Activated T-helper 1 cell treated with anti-CD3 and anti-CD28 coated beads, Interleukin-12 subunit alpha, Interleukin-12 subunit beta, Interleukin-2, Interleukin-4 antibody, amounts not matched to agents 30 ng/mL and 10 ng/mL and 1 ng/mL, durations not matched to agents 14 hours and 24 hours and 36 hours (primary cell): ENCODE measurements at regions of chr6 and their contacts with region 1.

Region 1: DNA sequence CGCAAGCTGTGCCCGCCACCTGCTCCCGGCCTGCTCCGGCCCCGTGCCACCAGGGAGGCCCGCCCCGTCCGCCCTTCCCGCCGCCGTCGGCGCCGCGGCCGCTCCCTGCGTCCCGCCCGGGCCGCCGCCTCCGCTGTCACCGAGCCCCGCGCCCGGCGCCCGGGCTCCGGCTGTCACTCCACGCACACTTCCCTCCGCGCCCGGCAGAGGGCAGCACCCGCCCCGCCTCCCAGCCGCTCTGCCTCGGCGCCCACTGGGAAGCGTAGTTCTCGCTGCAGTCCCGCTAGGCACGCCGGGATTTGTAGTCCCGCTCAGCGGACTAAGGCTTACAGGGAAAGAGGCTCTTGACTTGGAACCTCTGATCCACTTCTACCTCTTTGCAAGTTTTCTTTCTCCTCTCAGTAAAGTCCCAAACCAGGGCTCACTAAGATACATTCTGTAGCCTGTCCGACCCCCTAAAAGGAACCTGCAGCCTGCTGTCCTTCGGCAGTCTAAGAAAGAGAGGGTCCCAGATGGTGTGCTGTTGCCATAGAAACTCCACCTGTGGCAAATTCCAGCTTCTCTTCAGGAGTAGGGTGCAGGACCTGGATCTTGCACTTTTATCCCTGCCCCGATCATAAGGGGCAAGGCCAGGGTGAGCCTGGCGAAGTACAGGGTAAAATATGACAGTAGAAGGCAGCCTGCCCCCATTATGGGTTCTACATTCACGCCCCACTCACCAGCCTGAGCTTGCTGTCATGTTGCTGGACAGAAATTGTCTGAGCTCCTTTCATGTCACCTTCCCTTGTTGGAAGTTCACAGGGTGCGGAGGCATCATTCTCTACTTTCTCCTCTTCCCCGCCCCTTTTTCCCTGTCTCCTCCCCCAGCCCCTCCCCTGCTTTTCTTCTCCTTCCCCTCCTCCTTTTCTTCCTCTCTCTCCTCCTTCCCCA is at the start of gene TFEB:
- DNase-seq: peak; percentile 92
- H3K4me3 Mint-ChIP-seq: peak within 1 kb of the TSS; percentile 80
- H3K27ac Mint-ChIP-seq: peak within 1 kb of the TSS; percentile 31
- H3K4me1 Mint-ChIP-seq: peaks cover 23% of the 10 kb centered on the region
- H3K27me3 Mint-ChIP-seq: no peaks in the 10 kb centered on the region
- total RNA-seq, gene TFEB: 15.6 and 17.2 TPM in 2 replicates

Region 2: DNA sequence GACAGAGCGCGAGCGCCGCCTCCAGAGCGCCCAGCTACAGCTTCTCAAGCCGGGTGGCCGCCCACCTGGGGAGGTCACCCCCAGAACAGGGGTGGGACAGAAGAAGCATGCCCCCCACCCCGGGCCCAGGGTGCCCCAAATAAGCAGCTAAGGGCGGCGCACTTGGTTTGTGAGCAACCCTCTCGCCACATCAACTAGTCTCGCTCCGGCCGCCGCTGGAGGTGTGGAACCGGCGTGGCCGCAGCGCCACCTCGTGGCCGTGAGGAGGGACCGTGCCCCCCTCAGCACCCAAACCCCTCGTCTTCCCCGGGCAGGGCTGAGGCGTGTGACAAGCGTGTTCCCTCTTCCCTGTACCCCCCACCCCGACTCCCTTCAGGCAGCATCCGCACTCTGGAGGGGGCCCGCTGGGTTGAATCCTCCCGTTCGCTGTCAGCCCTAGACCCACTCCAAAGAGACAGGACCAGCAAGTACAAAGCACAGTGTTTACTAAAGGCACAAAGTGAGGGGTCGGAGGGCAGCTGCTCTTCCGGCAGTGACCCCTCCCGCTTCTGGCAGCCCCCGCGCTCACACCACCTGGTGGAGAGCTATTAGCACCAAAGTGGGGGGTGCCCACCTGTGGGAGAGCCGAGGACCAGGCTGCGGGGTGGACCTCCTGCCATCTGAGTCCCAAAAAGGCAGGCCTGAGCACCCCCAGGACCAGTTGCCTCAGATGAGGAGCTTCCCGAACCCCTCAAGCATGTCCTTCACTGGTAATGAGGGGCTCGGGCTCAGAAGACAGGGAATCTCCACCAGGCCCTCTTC is 52.0 kb before region 1 on chr6:
- intact Hi-C with region 1: no loop called
- DNase-seq: peak; percentile 71
- H3K4me3 Mint-ChIP-seq: peak overlapping the region; percentile 75
- H3K27ac Mint-ChIP-seq: peak overlapping the region; percentile 73
- H3K4me1 Mint-ChIP-seq: peaks cover 6% of the 10 kb centered on the region
- H3K27me3 Mint-ChIP-seq: no peaks in the 10 kb centered on the region

Region 3: GRCh38 chr6:41706876-41707564 is 28.7 kb before region 1 on chr6:
- intact Hi-C with region 1: loop called (anchors 1 kb)
- DNase-seq: no peak
- H3K4me3 Mint-ChIP-seq: peak overlapping the region; percentile 4
- H3K27ac Mint-ChIP-seq: peak overlapping the region; percentile 83
- H3K4me1 Mint-ChIP-seq: peaks cover 27% of the 10 kb centered on the region
- H3K27me3 Mint-ChIP-seq: no peaks in the 10 kb centered on the region

Region 4: GRCh38 chr6:41941280-41942066 is 205.8 kb after region 1 on chr6 and contains the start of gene CCND3:
- intact Hi-C with region 1: loop called (anchors 1 kb)
- DNase-seq: peak; percentile 89
- H3K4me3 Mint-ChIP-seq: peak within 1 kb of the TSS; percentile 99
- H3K27ac Mint-ChIP-seq: peak within 1 kb of the TSS; percentile 94
- H3K4me1 Mint-ChIP-seq: peaks cover 43% of the 10 kb centered on the region
- H3K27me3 Mint-ChIP-seq: no peaks in the 10 kb centered on the region
- total RNA-seq, gene CCND3: 351 and 356 TPM in 2 replicates

Region 5: DNA sequence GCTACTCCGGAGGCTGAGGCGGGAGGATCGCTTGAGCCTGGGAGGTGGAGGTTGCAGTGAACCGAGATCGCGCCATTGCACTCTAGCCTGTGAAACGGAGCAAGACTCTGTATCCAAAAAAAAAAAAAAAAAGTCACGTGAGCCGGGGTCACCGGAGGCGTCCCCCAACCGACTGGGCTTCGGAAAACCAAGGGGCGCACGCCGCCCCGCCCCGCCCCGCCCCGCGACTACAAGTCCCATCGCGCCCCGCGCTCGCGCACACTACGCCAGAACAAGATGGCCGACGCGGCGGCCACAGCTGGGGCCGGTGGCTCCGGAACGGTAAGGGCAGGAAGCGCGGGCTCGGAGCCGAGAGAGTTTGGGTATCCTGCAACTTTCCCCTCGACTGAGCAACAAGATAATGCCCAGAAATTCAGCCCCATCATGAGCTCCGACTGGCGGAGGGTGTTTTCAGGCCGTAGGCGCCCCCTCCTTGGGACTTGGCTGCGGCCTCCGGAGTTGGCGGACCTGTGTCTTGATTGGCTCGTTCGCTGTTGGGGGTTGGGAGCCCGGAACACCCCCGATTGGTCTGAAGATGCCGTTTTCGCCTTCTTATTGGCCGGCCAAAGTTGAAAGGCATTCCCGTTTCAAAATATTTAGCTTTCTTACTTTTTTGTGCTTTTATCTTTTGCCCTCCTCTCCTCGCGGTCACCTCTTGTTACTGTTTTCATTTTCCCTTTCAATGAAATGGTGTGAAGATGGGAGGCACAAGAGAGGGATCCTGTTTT is 314.8 kb after region 1 on chr6 and contains the start of gene TAF8:
- intact Hi-C with region 1: loop called (anchors 1 kb)
- DNase-seq: peak; percentile 87
- H3K4me3 Mint-ChIP-seq: peak within 1 kb of the TSS; percentile 93
- H3K27ac Mint-ChIP-seq: peak within 1 kb of the TSS; percentile 92
- H3K4me1 Mint-ChIP-seq: peaks cover 58% of the 10 kb centered on the region
- H3K27me3 Mint-ChIP-seq: no peaks in the 10 kb centered on the region
- total RNA-seq, gene TAF8: 36.7 and 38.3 TPM in 2 replicates